Prostate gland (tissue), 2 donors: ENCODE measurements at regions of chr4 and their contacts with region 1.

Region 1: DNA sequence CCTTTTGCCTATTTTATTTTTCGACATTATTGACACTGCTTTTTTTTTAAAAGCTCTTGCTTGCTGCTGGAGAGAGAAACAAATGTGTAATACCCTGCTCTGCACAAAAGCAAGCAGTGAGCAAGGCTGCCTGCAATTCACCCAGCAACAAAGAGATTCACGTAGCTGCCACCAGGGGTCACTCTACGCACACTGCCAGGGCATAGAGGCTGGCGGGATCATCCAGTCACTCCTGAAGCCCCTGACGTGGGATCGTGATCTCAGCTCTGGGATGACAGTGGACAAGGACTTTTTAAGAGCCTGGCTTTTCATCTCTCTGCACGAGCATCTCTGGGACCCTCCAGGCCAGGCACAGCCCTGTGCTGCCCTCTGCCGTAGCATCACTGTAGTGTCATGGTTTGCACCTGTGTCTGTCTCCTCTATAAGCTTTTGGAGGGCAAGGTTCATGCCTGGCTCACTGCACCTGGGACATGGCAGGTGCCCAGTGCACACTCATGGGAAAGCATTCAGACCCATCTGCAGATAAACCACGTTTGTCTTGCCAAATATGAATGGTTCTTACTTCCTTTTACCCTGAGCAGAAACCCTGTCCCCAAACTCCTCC is 19.8 kb downstream of the C4orf50 start:
- DNase-seq: peak; percentile 61
- H3K4me3 ChIP-seq: no peak overlapping the region
- H3K27ac ChIP-seq: no peak overlapping the region
- H3K4me1 ChIP-seq: no peaks in the 10 kb centered on the region
- H3K27me3 ChIP-seq: no peaks in the 10 kb centered on the region
- CTCF ChIP-seq: peak; percentile 71 to 90 (median 84)
- POLR2A ChIP-seq: no peak

Region 2: DNA sequence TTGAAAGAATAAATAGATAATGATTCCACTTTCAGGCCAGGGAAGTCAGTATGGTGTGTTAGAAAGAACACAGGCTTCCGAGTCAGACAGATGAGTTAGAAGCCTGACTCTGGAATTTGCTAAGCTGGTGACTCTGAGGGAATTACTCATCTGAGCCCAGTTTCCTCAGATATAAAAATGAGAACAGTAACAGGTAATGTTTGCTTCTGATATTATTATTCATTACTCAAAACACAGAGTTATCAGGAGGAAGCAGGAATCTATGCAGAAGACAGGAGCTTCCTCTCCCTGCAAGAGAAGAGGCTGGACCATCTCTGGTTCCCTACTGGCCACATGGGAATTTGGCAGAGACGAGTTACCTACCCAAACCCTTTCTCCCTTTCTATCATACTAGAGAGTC is 453.2 kb before region 1 on chr4:
- intact Hi-C with region 1: no loop called
- DNase-seq: no peak
- H3K4me3 ChIP-seq: no peak overlapping the region
- H3K27ac ChIP-seq: no peak overlapping the region
- H3K4me1 ChIP-seq: no peaks in the 10 kb centered on the region
- H3K27me3 ChIP-seq: no peaks in the 10 kb centered on the region
- CTCF ChIP-seq: no peak
- POLR2A ChIP-seq: no peak

Region 3: DNA sequence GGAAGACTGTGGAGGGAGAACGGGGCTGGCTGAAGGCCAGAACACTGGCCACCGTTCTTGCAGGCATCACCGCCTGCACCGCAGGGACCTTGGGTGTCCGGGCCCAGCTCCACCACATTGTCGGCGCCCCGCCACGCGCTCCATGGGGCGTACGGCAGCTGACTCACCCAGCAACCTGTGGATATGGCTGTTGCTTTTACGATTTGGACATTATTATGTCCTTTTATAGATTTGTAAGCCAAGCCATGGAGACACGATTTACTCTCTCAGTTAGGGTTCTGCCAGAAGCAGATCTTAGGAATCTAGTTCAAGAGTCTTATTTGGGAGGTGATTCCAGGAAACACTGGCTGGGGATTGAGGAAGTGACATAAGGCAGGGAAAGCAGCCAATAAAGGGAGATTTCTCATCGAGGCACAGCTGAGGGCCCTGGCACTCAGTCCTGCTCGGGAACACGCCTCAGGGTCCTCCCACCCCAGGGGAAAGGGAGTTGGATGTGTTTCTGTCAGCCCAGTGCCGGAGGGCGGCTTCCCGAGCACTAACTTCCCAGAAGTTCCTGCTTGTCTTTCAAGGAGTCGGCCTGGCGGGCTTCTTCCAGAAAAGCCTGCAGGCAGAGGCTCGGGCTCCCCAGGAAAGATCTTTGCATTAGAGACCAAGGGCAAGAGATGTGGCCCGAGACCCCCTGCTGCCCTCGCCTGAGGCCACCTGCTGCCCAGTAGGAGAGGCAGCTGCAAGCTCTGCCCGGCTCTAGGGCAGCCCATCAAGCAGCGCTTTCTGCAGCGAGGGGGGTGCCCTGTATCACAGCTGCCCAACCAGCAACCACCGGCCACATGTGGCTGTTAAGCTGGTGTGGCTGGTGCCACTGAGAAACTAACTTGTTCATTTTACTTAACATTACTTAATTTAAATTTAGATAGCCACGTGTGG is 158.4 kb before region 1 on chr4:
- intact Hi-C with region 1: no loop called
- DNase-seq: no peak
- H3K4me3 ChIP-seq: no peak overlapping the region
- H3K27ac ChIP-seq: no peak overlapping the region
- H3K4me1 ChIP-seq: no peaks in the 10 kb centered on the region
- H3K27me3 ChIP-seq: no peaks in the 10 kb centered on the region
- CTCF ChIP-seq: no peak
- POLR2A ChIP-seq: no peak

Region 4: DNA sequence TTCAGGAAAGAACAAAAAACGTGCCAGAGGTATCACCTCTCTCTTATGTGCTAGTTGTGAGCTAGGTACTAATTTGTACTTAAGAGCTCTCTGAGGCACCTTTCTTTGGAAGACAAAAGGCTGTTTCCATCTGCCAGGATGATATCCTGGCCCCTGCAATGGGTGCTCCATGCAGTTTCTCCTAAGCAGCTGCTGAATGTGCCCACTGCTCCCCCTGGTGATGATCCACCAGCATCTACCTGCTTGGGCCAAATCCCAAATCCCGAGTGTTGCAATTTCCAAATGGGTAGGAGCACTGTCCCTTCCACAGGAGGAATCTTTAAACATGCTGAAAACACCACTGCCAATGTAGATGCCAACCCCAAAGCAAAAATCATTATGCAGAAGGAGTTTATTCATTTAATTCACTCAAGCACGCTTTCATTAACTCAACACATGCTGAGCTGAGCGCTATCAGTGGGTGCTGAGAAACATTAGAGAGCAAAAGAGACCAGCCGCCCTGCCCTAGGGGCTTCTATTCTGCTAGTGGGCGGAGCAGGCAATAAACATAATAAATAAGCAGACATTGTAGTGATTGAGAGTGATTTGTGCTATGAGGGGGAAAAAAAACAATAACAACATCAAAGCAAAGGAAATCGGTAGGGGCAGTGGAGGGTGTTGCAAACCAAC is 89.4 kb after region 1 on chr4:
- intact Hi-C with region 1: loop called (anchors 5 kb)
- DNase-seq: peak; percentile 31
- H3K4me3 ChIP-seq: no peak overlapping the region
- H3K27ac ChIP-seq: no peak overlapping the region
- H3K4me1 ChIP-seq: no peaks in the 10 kb centered on the region
- H3K27me3 ChIP-seq: no peaks in the 10 kb centered on the region
- CTCF ChIP-seq: peak in 3 of 4 experiments; percentile 55 to 66 (median 58)
- POLR2A ChIP-seq: no peak